AG04450 (cell line): ENCODE measurements at regions of chr14 and their contacts with region 1.

Region 1: GRCh38 chr14:101861464-101861863 is 100.0 kb downstream of the PPP2R5C start:
- DNase-seq: no peak
- H3K4me3 ChIP-seq: no peak overlapping the region
- H3K27ac ChIP-seq: no peak overlapping the region
- H3K27me3 ChIP-seq: no peaks in the 10 kb centered on the region
- CTCF ChIP-seq: no peak

Region 2: GRCh38 chr14:101809671-101810514 is 51.6 kb before region 1 on chr14:
- CTCF ChIA-PET with region 1: no interaction called
- POLR2A ChIA-PET with region 1: interaction called, 11 read pairs
- DNase-seq: peak; percentile 79
- H3K4me3 ChIP-seq: peak overlapping the region; percentile 88
- H3K27ac ChIP-seq: peak overlapping the region; percentile 99
- H3K27me3 ChIP-seq: no peaks in the 10 kb centered on the region
- CTCF ChIP-seq: no peak

Region 3: DNA sequence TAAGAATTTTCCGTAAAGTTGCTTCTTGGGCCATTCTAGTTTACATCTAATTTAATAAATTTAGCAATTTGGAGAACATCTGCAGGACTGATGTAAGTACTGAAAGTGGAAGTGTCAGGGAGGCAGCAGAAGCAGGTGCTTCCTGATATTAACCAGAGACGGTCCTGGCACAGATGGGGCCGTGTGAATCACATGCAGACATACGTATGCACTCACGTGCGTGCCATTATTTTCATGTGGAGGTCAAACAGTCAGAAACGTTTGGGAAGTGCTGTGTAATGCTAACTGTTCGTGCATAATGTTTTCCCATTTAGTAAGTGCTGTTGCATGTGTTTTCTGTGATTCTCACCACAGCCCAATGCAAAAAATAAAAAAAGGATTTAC is 15.1 kb after region 1 on chr14:
- CTCF ChIA-PET with region 1: no interaction called
- POLR2A ChIA-PET with region 1: no interaction called
- DNase-seq: no peak
- H3K4me3 ChIP-seq: no peak overlapping the region
- H3K27ac ChIP-seq: no peak overlapping the region
- H3K27me3 ChIP-seq: no peaks in the 10 kb centered on the region
- CTCF ChIP-seq: no peak

Region 4: GRCh38 chr14:101917413-101918017 is 56.1 kb after region 1 on chr14:
- CTCF ChIA-PET with region 1: no interaction called
- POLR2A ChIA-PET with region 1: no interaction called
- DNase-seq: no peak
- H3K4me3 ChIP-seq: no peak overlapping the region
- H3K27ac ChIP-seq: peak overlapping the region; percentile 21
- H3K27me3 ChIP-seq: no peaks in the 10 kb centered on the region
- CTCF ChIP-seq: no peak